H1 (cell line): ENCODE measurements at regions of chr20 and their contacts with region 1.

Region 1: DNA sequence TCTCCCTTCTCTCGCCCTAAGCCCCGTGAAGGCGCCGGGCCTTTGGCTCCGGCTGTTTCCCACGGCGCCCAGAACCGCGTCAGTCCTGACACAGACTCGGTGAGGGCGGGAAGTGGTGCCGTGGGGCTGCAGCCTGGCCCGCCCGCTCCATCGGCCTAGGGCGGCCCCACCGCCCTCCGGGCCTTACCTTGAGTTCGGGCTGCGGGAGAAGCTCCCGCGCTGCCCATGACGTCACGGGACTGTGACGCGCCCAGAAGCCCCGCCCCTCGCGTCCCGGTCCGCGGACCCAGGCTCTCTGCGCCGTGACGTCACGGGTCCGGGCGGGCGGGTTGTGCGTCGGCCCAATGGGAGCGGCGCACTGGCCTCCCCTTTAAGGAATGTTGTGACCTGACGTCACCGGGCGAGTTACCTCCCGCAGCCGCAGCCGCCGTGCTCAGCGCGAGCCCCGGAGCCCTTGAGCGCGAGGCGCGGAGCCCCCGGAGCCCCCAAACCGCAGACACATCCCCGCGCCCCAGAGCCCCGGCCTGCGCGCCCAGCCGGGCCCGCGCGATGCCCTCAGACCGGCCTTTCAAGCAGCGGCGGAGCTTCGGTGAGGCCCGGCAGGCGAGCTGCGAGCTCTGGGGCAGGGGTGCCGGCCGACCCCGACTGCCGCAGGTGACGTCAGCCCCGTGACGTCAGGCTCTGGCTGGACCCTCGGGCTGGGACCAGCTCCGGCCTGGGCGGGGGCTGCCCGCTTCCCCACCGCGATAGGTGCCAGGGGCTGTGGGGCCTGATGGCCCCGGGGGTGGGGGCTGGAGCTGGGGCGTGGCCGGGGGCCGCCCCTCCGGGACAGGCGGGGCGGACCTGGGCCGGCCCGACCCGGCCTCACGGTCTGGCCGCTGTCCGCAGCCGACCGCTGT is at the start of gene MAP1LC3A:
- DNase-seq: peak; percentile 46 to 97
- H3K4me3 ChIP-seq: peak within 1 kb of the TSS; percentile 51 to 80 (median 56)
- H3K27ac ChIP-seq: peak within 1 kb of the TSS; percentile 50; the same call in 1 of the 2 replicates
- H3K4me1 ChIP-seq: peaks cover 0 to 2% (median 0%) of the 10 kb centered on the region in 4 experiments; a peak in 1 of 7 replicates
- H3K27me3 ChIP-seq: peaks cover 0 to 2% (median 0%) of the 10 kb centered on the region in 4 experiments; a peak in 1 of 7 replicates
- CTCF ChIP-seq: no peak
- EP300 ChIP-seq: no peak; a peak in 1 of 3 replicates
- POLR2A ChIP-seq: peak in 1 of 2 experiments; percentile 59; a peak in 2 of 3 replicates
- RAD21 ChIP-seq: no peak
- total RNA-seq, gene MAP1LC3A: 5.0 and 6.3 TPM in 2 replicates

Region 2: DNA sequence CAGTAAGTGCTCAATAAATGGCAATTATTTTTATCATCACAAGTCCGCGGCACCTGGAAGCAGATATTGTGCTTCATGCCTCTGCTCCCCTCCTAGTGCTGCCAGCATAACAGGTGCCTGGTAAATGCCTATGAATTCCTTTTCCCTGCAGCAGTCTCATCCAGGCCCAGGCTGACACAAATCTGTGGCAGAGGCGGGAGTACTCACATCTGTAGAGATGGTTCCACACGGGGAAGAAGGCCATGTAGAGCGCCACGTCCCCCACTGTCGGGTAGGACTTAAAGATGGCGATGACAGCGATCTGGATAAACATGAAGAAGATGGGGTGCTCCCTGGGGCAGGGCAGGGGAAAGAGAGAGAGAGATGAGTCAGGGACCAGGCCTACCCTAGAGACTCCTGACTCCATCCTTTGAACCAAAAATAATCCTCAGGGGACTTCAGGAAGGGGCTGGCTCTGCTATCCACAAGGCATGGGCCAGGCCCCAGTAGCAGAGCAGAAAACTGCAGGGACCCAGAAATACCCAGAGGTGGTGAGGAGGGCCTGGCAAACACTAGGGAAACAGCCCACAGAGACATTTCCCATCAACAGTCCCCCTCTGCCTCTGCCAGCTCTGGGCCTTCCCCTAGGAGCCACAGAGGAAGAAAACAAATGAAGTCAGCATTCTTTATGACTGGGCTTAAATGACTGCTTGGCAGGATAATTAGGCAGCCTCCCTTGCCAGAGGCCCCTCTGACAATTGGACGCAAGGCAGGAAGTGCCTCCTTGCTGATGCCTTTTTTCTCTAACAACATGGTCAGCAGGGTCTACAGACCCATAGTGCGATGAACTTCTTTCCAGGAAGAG is 23.0 kb after region 1 on chr20:
- CTCF ChIA-PET with region 1: interaction called, 15 read pairs
- POLR2A ChIA-PET with region 1: interaction called, 5 read pairs
- DNase-seq: no peak
- H3K4me3 ChIP-seq: no peak overlapping the region
- H3K27ac ChIP-seq: no peak overlapping the region
- H3K4me1 ChIP-seq: no peaks in the 10 kb centered on the region; a peak in 1 of 7 replicates
- H3K27me3 ChIP-seq: no peaks in the 10 kb centered on the region
- CTCF ChIP-seq: no peak
- EP300 ChIP-seq: no peak
- POLR2A ChIP-seq: no peak
- RAD21 ChIP-seq: no peak

Region 3: GRCh38 chr20:34704177-34705007 is 145.8 kb after region 1 on chr20 and contains the start of gene TP53INP2:
- CTCF ChIA-PET with region 1: interaction called, 48 read pairs
- POLR2A ChIA-PET with region 1: interaction called, 7 read pairs
- DNase-seq: peak in 1 of 2 experiments; percentile 95
- H3K4me3 ChIP-seq: peak within 1 kb of the TSS; percentile 75 to 90 (median 82)
- H3K27ac ChIP-seq: peak within 1 kb of the TSS; percentile 73; the same call in 1 of the 2 replicates
- H3K4me1 ChIP-seq: peaks cover 0 to 9% (median 5%) of the 10 kb centered on the region in 4 experiments; a peak in 4 of 7 replicates
- H3K27me3 ChIP-seq: peaks cover 0 to 16% (median 13%) of the 10 kb centered on the region in 4 experiments; a peak in 6 of 7 replicates
- CTCF ChIP-seq: no peak
- EP300 ChIP-seq: no peak; a peak in 1 of 3 replicates
- POLR2A ChIP-seq: peak; percentile 64 to 66
- RAD21 ChIP-seq: no peak
- total RNA-seq, gene TP53INP2: 4.5 and 4.8 TPM in 2 replicates